Heart left ventricle (tissue), 16 donors: ENCODE measurements at regions of chr10 and their contacts with region 1.

Region 1: DNA sequence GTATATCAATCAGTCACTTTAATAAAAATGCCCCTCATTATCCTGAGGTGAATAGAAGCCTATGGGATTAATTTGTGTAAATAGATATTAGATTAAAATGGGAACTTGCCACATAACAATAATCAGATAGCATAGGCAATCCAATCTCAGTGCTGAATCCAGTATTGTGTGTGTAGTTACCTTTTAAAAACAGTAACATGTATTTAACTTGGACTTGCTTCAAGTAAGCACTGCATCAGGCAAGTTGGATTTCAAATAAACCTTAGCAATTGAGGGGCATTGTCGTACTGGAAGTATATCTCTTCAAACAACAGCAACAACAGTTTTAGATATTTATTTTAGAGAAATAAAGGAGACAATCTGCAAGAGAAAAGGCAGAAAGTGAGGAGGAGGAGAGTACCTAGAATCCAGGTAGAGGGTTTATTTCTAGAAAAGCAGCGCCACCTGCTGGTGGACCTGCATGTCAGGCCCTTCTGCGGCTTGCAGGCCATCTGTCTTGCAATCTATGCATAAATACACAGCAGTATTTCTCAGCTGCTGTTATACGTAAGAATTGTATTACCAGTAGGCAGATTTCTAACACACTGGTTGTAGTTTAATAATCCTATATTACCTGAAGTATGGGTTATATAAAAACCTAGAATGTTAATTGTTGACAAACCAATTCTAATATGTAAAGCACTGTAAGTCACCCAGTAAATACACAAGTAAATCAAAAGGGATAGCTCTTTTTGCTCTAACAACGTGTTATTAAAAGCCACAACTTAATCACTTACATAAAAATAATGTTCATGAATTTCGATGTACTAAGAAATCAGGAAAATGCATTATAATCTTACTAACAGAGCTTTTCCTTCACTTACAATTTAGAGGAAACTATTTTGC is 652.8 kb downstream of the KCNMA1 start:
- DNase-seq: peak; percentile 57 to 76 (median 65)
- ATAC-seq: peak in 3 of 4 donors; percentile 72 to 89 (median 80)
- H3K4me3 ChIP-seq: no peak overlapping the region
- H3K27ac ChIP-seq: no peak overlapping the region
- H3K4me1 ChIP-seq: no peaks in the 10 kb centered on the region
- H3K27me3 ChIP-seq: no peaks in the 10 kb centered on the region
- CTCF ChIP-seq: peak; percentile 80 to 97 (median 92)
- POLR2A ChIP-seq: no peak

Region 2: DNA sequence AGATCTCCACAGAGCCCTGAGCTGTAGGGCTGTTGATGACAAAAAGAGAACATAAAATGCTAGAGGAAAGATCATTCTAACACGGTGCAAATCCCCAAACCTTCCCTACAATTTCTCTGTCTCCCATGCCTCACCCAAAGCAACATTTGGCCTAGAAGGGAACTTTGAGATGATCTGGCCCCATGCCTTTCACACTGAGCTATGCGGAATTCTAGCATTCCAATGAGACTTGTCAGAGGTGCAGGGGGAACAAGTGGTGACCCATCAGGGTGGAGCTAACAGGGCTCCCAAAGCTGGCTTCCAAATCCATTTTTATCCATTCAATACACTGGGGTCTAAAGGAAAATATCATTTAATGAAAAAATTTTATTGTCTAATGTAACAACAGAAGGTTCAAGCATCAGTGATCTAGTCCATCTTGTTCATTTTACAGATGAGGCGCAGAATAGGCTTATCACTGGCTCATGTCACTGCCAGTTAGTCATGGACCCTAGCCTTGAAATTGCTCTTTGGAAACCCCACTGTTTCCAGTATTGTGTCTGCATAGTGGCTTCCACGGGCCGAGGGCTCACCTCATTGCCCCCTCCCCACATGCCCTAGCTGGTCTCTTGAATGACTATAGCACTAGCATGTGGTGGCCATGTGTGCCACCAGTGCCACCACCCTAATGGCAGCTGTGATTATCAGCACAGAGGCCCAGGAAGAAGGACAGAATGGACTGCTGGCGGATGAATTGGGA is 552.4 kb before region 1 on chr10:
- intact Hi-C with region 1: loop called in 1 of 10 experiments (anchors 10 kb)
- DNase-seq: peak in 4 of 5 donors; percentile 26 to 63 (median 48)
- ATAC-seq: peak; percentile 22 to 49 (median 38)
- H3K4me3 ChIP-seq: no peak overlapping the region
- H3K27ac ChIP-seq: peak overlapping the region; percentile 68 to 91 (median 80)
- H3K4me1 ChIP-seq: peaks cover 0 to 82% (median 62%) of the 10 kb centered on the region in 12 donors
- H3K27me3 ChIP-seq: no peaks in the 10 kb centered on the region
- CTCF ChIP-seq: no peak
- POLR2A ChIP-seq: no peak

Region 3: GRCh38 chr10:76558586-76558985 is 426.2 kb before region 1 on chr10:
- intact Hi-C with region 1: loop called in 5 of 10 experiments (anchors 5 to 10 kb)
- DNase-seq: no peak
- ATAC-seq: no peak
- H3K4me3 ChIP-seq: no peak overlapping the region
- H3K27ac ChIP-seq: peak overlapping the region in 1 of 12 donors; percentile 35
- H3K4me1 ChIP-seq: peaks cover 0 to 35% (median 10%) of the 10 kb centered on the region in 12 donors
- H3K27me3 ChIP-seq: no peaks in the 10 kb centered on the region
- CTCF ChIP-seq: no peak
- POLR2A ChIP-seq: no peak

Region 4: DNA sequence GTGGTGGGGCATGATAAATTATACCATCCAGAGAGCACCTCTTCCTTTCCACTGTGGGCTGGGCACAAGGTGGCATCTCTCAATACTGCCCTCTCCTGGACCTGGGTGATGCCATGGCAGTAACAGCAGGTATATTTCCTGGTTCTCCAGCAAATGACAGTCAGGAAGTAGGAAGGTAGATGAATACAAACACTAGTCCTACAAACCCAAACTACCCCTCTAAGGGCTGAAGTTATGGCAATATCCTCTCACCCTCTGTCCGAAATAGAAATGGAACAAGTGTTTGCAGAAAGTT is 352.1 kb before region 1 on chr10:
- intact Hi-C with region 1: loop called in 1 of 10 experiments (anchors 10 kb)
- DNase-seq: no peak
- ATAC-seq: peak; percentile 41 to 70 (median 56)
- H3K4me3 ChIP-seq: no peak overlapping the region
- H3K27ac ChIP-seq: no peak overlapping the region
- H3K4me1 ChIP-seq: peaks cover 0 to 16% (median 0%) of the 10 kb centered on the region in 12 donors
- H3K27me3 ChIP-seq: no peaks in the 10 kb centered on the region
- CTCF ChIP-seq: peak in 7 of 12 donors; percentile 7 to 30 (median 29)
- POLR2A ChIP-seq: no peak